Right cardiac atrium (tissue), 5 donors: ENCODE measurements at regions of chr11 and their contacts with region 1.

Region 1: GRCh38 chr11:12235947-12236743 is 125.8 kb downstream of the MICAL2 start:
- DNase-seq: peak in 1 of 3 donors; percentile 64
- ATAC-seq: peak; percentile 31 to 32
- H3K4me3 ChIP-seq: no peak overlapping the region
- H3K27ac ChIP-seq: peak overlapping the region; percentile 65
- H3K4me1 ChIP-seq: peaks cover 10% of the 10 kb centered on the region
- H3K27me3 ChIP-seq: no peaks in the 10 kb centered on the region

Region 2: GRCh38 chr11:12052676-12053605 is 183.2 kb before region 1 on chr11:
- intact Hi-C with region 1: loop called in 2 of 4 experiments (anchors 5 to 10 kb)
- DNase-seq: no peak
- ATAC-seq: no peak
- H3K4me3 ChIP-seq: no peak overlapping the region
- H3K27ac ChIP-seq: no peak overlapping the region
- H3K4me1 ChIP-seq: peaks cover 5% of the 10 kb centered on the region
- H3K27me3 ChIP-seq: no peaks in the 10 kb centered on the region

Region 3: GRCh38 chr11:12087075-12088004 is 148.8 kb before region 1 on chr11:
- intact Hi-C with region 1: loop called in 3 of 4 experiments (anchors 5 to 10 kb)
- DNase-seq: peak in 1 of 3 donors; percentile 77
- ATAC-seq: peak; percentile 24 to 30
- H3K4me3 ChIP-seq: no peak overlapping the region
- H3K27ac ChIP-seq: peak overlapping the region; percentile 80
- H3K4me1 ChIP-seq: peaks cover 22% of the 10 kb centered on the region
- H3K27me3 ChIP-seq: no peaks in the 10 kb centered on the region

Region 4: GRCh38 chr11:12159351-12160099 is 76.6 kb before region 1 on chr11:
- intact Hi-C with region 1: loop called in 2 of 4 experiments (anchors 10 kb)
- DNase-seq: peak in 1 of 3 donors; percentile 60
- ATAC-seq: peak; percentile 35 to 62
- H3K4me3 ChIP-seq: no peak overlapping the region
- H3K27ac ChIP-seq: peak overlapping the region; percentile 96
- H3K4me1 ChIP-seq: peaks cover 32% of the 10 kb centered on the region
- H3K27me3 ChIP-seq: no peaks in the 10 kb centered on the region